ENCODE measurements at regions of chr6 and their contacts with region 1.

Region 1: DNA sequence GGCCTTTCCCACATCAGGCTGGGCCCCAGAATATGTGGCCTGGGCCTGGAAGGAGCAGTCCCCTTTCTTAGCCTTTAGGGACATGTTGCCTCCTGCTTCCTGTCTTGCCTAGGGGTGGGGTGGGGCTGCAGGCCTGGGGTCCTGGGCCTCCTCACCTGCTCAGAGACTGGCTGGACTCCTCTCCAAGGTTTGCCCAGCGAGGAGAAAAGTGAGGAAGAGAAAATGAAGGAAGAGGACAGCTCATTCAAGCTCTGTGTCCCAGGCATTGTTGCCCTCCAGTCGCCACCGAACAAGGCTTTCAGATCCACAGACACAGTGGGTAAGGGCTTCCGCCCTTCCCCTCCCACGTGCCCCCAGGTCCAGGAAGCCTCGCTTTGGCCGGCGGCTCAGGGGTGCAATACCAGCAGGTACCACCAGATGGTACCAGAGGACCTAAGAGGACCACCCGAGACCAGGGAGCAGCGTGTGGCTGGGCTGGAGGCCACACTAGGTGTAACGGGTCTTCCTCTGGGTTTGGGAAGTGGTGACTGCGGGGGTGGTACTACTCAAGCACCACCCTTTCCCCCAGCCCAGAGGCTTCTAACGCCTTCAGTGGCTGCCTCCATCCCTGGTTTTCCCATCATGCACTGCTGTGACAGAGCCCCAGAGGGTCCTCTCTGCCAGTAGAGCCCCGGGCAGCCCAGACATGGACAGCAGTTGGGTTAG is 5.5 kb upstream of the BAK1 start:
- DNase-seq: peak; percentile 54 to 75 (median 71)
- H3K4me3 ChIP-seq: peak overlapping the region in 1 of 3 experiments; percentile 43
- H3K4me3 Mint-ChIP-seq: peak overlapping the region; percentile 56 to 62
- H3K27ac ChIP-seq: no peak overlapping the region
- H3K27ac Mint-ChIP-seq: peak overlapping the region in 3 of 7 donors; percentile 40 to 87 (median 81)
- H3K4me1 ChIP-seq: peaks cover 11 to 12% of the 10 kb centered on the region in 2 donors
- H3K4me1 Mint-ChIP-seq: peaks cover 11% of the 10 kb centered on the region
- H3K27me3 ChIP-seq: no peaks in the 10 kb centered on the region
- H3K27me3 Mint-ChIP-seq: peaks cover 0 to 2% (median 2%) of the 10 kb centered on the region in 3 donors
- CTCF ChIP-seq: peak; percentile 87

Region 2: GRCh38 chr6:33700391-33701050 is 115.0 kb after region 1 on chr6:
- intact Hi-C with region 1: loop called in 1 of 2 experiments (anchors 5 kb)
- DNase-seq: peak; percentile 22 to 48 (median 23)
- H3K4me3 ChIP-seq: no peak overlapping the region
- H3K4me3 Mint-ChIP-seq: no peak overlapping the region
- H3K27ac ChIP-seq: no peak overlapping the region
- H3K27ac Mint-ChIP-seq: peak overlapping the region in 2 of 7 donors; percentile 21 to 46
- H3K4me1 ChIP-seq: no peaks in the 10 kb centered on the region
- H3K4me1 Mint-ChIP-seq: no peaks in the 10 kb centered on the region
- H3K27me3 ChIP-seq: no peaks in the 10 kb centered on the region
- H3K27me3 Mint-ChIP-seq: peaks cover 0 to 1% (median 0%) of the 10 kb centered on the region in 3 donors
- CTCF ChIP-seq: peak; percentile 63